Activated CD4-positive, alpha-beta memory T cell treated with anti-CD3 and anti-CD28 coated beads for 36 hours (primary cell): ENCODE measurements at regions of chr12 and their contacts with region 1.

Region 1: DNA sequence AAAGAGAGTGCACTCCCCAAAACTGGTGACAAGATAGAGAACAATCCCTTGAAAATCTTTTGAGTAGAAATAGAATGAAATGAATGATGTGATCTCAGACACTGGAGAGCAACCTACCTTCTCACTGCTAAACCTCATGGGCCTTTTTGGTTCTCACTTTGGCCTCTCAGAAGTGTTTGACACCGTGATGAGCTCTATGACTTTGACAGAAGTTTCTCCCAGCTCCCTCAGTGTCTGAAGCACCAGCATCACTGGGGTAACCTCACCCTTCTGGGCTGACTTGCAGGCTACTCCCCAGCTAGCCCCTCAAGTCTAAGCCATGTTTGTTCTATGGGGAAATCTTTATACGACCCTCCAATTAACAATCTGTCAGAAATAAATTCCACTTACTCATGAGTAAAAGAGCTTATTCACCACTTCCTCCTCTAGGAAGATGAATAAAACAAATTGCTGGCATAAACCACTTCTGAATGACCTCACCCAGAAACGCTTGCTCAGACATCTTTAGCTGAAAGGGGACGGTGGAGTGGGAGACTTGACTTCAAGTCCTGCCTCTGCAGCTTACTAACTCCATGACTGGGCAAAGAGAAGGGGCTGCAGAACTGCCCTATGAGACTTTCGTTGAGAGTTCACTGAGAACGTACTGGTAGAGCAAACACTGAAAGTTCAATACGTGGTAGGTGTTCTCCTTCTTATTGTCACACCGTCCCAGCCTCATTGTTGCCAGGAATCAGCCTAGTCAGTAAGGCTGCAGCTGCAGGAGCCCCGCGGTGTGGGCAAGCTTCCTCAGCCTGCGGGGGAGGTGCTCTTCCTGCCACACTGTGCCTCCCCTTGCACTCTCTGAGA is 46.5 kb downstream of the ST8SIA1 start:
- DNase-seq: peak; percentile 73
- H3K4me3 Mint-ChIP-seq: peak overlapping the region; percentile 77
- H3K27ac Mint-ChIP-seq: peak overlapping the region; percentile 95
- H3K4me1 Mint-ChIP-seq: peaks cover 59% of the 10 kb centered on the region
- H3K27me3 Mint-ChIP-seq: no peaks in the 10 kb centered on the region

Region 2: DNA sequence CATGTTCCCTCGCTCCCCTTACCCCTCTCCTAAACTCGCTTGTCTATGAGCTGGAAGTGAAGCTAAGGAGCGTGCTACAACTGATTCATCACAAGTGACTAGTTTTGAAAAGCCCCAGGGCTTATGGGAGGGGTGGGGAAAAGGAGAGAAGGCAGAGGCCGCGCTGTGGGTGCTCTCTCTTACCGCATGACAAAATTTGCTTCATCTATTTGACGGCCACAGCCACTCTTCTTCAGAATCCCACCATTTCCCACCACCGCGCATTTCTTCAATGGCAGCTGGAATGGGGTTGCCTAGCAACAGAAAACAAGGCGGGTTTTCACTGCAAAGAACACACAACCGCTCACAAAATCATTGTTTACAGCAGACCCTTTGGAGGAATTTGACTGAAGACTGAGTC is 32.9 kb before region 1 on chr12:
- CTCF ChIA-PET with region 1: no interaction called
- POLR2A ChIA-PET with region 1: no interaction called
- intact Hi-C with region 1: no loop called
- DNase-seq: no peak
- H3K4me3 Mint-ChIP-seq: no peak overlapping the region
- H3K27ac Mint-ChIP-seq: no peak overlapping the region
- H3K4me1 Mint-ChIP-seq: peaks cover 8% of the 10 kb centered on the region
- H3K27me3 Mint-ChIP-seq: no peaks in the 10 kb centered on the region

Region 3: GRCh38 chr12:22321638-22322037 is 33.6 kb after region 1 on chr12:
- CTCF ChIA-PET with region 1: interaction called, 5 read pairs
- POLR2A ChIA-PET with region 1: interaction called, 5 read pairs
- intact Hi-C with region 1: loop called (anchors 2 kb)
- DNase-seq: peak; percentile 77
- H3K4me3 Mint-ChIP-seq: peak overlapping the region; percentile 45
- H3K27ac Mint-ChIP-seq: peak overlapping the region; percentile 81
- H3K4me1 Mint-ChIP-seq: peaks cover 55% of the 10 kb centered on the region
- H3K27me3 Mint-ChIP-seq: no peaks in the 10 kb centered on the region

Region 4: GRCh38 chr12:22409377-22410164 is 121.6 kb after region 1 on chr12:
- CTCF ChIA-PET with region 1: interaction called, 4 read pairs
- POLR2A ChIA-PET with region 1: interaction called, 8 read pairs
- intact Hi-C with region 1: loop called (anchors 1 kb)
- DNase-seq: peak; percentile 78
- H3K4me3 Mint-ChIP-seq: peak overlapping the region; percentile 69
- H3K27ac Mint-ChIP-seq: peak overlapping the region; percentile 88
- H3K4me1 Mint-ChIP-seq: peaks cover 49% of the 10 kb centered on the region
- H3K27me3 Mint-ChIP-seq: no peaks in the 10 kb centered on the region